Activated CD4-positive, alpha-beta T cell treated with anti-CD3 and anti-CD28 coated beads, Interleukin-2, amount 10 ng/mL, durations not matched to agents 24 days and 14 days (primary cell): ENCODE measurements at regions of chr20 and their contacts with region 1.

Region 1: DNA sequence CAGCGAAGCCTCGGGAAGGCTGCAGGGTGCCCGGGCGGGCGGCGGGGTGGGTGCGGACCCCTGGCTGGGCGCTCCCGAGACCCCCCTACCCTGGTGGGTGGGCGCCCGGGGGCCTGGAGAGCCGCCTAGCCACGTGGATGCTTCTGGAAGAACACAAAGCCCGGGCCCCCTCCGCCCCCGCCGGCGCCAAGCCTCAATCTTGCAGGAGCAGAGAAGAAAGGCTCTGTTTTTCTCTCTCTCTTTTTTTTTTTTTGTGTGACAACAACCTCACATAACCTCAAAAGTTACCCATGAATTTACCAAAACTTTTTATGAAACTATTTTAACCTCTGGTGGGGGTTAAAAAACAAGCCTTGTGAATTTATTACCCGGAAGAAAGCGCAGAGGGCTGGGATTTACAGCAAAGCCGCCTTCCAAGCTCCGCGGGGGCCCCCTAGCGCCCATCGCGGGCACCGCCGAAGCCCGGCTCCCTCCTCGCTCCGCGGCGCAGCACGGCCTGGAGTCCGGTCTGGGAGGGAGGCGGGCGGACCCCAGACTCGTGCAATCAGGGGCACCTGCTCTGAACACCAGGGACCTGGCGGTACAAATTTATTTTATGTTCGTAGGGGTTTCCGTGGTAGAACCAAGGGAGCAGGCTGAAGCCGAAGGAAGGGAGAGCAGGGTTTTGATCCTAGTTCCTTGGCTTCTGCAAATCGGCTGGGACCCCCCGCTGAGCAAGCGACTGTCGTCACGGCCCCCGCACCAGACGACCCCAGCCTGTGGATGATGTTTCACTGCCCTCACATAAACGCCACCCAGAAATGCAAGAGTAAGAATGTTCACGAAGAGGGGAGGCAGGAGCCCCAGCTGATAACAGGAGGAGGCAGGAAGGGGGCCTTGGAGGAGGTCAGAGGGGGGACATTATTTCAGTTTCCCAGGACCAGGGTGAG is 58.9 kb downstream of the ZNF831 start:
- DNase-seq: peak; percentile 95
- H3K4me3 Mint-ChIP-seq: peak overlapping the region; percentile 83
- H3K27ac Mint-ChIP-seq: peak overlapping the region; percentile 67
- H3K4me1 Mint-ChIP-seq: peaks cover 9% of the 10 kb centered on the region
- H3K27me3 Mint-ChIP-seq: peaks cover 4% of the 10 kb centered on the region

Region 2: DNA sequence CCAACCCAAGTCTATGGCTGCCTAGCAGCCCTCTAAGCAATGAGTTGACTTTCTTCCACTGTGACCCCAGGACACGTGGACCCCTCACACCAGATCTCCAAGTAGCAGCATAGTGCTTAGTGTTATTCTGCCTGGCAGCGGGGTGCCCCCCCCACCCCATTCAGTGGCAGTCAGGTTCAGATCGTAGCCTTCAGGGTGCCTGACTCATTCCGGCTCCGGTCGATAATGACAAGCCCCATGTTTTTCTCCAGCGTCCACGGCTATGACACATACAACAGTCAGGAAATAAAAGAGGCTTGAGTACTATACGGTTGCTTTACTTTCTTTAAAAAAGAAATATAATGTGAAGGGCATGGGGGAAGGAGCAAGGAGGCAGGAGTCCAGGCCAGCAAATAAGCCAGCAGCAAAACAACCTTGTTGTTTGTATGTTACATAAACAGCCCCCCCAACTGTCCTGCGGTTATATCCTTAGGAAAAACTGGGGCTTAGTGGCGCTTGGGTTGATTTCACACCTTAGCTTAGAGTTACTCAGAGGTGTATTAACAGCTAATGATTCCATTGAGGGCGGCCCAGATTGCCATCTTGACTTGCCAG is 346.9 kb before region 1 on chr20:
- intact Hi-C with region 1: loop called (anchors 5 kb)
- DNase-seq: no peak
- H3K4me3 Mint-ChIP-seq: no peak overlapping the region
- H3K27ac Mint-ChIP-seq: no peak overlapping the region
- H3K4me1 Mint-ChIP-seq: peaks cover 24% of the 10 kb centered on the region
- H3K27me3 Mint-ChIP-seq: peaks cover 3% of the 10 kb centered on the region

Region 3: GRCh38 chr20:59042796-59043660 is 179.5 kb before region 1 on chr20:
- intact Hi-C with region 1: loop called (anchors 5 kb)
- DNase-seq: peak; percentile 99
- H3K4me3 Mint-ChIP-seq: peak overlapping the region; percentile 93
- H3K27ac Mint-ChIP-seq: peak overlapping the region; percentile 96
- H3K4me1 Mint-ChIP-seq: peaks cover 42% of the 10 kb centered on the region
- H3K27me3 Mint-ChIP-seq: no peaks in the 10 kb centered on the region

Region 4: DNA sequence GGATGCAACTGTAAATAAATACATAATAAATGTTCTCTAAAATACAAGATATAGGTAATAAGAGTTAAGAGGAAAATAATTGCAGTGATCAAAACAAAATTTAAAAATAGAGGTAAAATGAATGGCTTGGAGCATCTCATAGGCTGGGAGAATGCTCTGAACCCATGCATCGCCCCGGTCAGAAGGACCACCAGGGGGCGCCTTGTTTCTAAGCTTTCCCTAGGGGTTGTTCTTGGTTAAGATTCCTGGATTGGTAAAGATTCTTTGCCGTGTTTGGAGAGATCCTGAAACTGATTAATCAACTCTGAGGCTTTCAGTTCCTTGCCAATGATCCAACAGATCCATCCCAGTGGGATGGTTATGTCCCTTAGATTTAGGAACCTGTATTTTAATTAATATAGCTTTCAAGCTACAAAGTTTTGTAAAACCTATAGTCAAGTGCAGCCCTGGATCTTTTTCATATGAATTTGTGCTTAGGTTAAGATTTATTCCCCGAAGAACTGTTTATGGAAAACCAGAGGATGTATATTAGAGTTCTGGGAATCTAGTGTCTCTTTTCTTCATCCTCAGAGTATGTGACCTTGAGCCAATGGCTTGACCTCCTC is 134.6 kb before region 1 on chr20:
- intact Hi-C with region 1: loop called (anchors 1 kb)
- DNase-seq: peak; percentile 94
- H3K4me3 Mint-ChIP-seq: no peak overlapping the region
- H3K27ac Mint-ChIP-seq: no peak overlapping the region
- H3K4me1 Mint-ChIP-seq: no peaks in the 10 kb centered on the region
- H3K27me3 Mint-ChIP-seq: peaks cover 39% of the 10 kb centered on the region

Region 5: GRCh38 chr20:59191756-59192532 is 30.6 kb before region 1 on chr20:
- intact Hi-C with region 1: no loop called
- DNase-seq: no peak
- H3K4me3 Mint-ChIP-seq: no peak overlapping the region
- H3K27ac Mint-ChIP-seq: no peak overlapping the region
- H3K4me1 Mint-ChIP-seq: no peaks in the 10 kb centered on the region
- H3K27me3 Mint-ChIP-seq: no peaks in the 10 kb centered on the region

Region 6: GRCh38 chr20:59403261-59403961 is 180.9 kb after region 1 on chr20:
- intact Hi-C with region 1: loop called (anchors 5 kb)
- DNase-seq: peak; percentile 93
- H3K4me3 Mint-ChIP-seq: peak overlapping the region; percentile 64
- H3K27ac Mint-ChIP-seq: no peak overlapping the region
- H3K4me1 Mint-ChIP-seq: no peaks in the 10 kb centered on the region
- H3K27me3 Mint-ChIP-seq: peaks cover 21% of the 10 kb centered on the region

Region 7: GRCh38 chr20:59481067-59481466 is 258.6 kb after region 1 on chr20:
- intact Hi-C with region 1: no loop called
- DNase-seq: no peak
- H3K4me3 Mint-ChIP-seq: no peak overlapping the region
- H3K27ac Mint-ChIP-seq: no peak overlapping the region
- H3K4me1 Mint-ChIP-seq: no peaks in the 10 kb centered on the region
- H3K27me3 Mint-ChIP-seq: peaks cover 9% of the 10 kb centered on the region

Region 8: DNA sequence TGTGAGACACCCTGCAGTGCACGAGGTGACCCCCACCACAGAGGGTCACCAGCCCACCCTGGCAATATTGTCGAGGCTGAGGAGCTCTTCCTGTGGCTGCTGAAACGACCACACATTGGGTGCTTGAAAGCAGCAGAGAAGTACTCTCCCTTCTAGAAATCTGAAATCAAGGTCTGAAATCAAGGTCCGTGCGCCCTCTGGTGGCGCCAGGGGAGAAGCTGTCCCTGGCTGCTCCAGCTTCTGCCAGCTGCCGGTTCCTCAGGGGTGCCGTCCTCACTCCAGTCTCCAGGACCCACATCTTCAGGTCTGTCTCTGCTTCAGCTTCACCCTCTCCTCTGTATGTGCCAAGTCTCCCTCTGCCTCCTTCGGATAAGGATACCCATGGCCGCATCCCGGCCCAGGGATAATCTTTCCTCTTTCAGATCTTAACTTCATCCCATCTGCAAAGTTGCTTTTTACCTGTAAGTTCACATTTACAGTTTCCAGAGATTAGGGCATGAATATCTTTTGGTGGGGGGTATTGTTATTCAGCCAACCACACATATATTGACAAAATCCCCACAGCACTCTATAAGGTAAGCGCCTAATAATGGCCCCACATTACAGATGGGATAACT is 273.5 kb after region 1 on chr20:
- intact Hi-C with region 1: loop called (anchors 5 kb)
- DNase-seq: peak; percentile 89
- H3K4me3 Mint-ChIP-seq: no peak overlapping the region
- H3K27ac Mint-ChIP-seq: no peak overlapping the region
- H3K4me1 Mint-ChIP-seq: no peaks in the 10 kb centered on the region
- H3K27me3 Mint-ChIP-seq: peaks cover 12% of the 10 kb centered on the region